ENCODE measurements at regions of chr2 and their contacts with region 1.

Region 1: GRCh38 chr2:102520028-102520427 is 47.0 kb downstream of the SLC9A4 start:
- H3K4me3 Mint-ChIP-seq: no peak overlapping the region
- H3K27ac Mint-ChIP-seq: no peak overlapping the region
- H3K4me1 Mint-ChIP-seq: no peaks in the 10 kb centered on the region
- H3K27me3 Mint-ChIP-seq: no peaks in the 10 kb centered on the region

Region 2: GRCh38 chr2:102592597-102592996 is 72.6 kb after region 1 on chr2:
- intact Hi-C with region 1: loop called (anchors 2 kb)
- H3K4me3 Mint-ChIP-seq: no peak overlapping the region
- H3K27ac Mint-ChIP-seq: no peak overlapping the region
- H3K4me1 Mint-ChIP-seq: no peaks in the 10 kb centered on the region
- H3K27me3 Mint-ChIP-seq: peaks cover 20% of the 10 kb centered on the region

Region 3: GRCh38 chr2:102615622-102616436 is 95.8 kb after region 1 on chr2:
- intact Hi-C with region 1: loop called (anchors 1 kb)
- H3K4me3 Mint-ChIP-seq: no peak overlapping the region
- H3K27ac Mint-ChIP-seq: no peak overlapping the region
- H3K4me1 Mint-ChIP-seq: peaks cover 12% of the 10 kb centered on the region
- H3K27me3 Mint-ChIP-seq: peaks cover 63% of the 10 kb centered on the region

Measured in dendritic cell treated with granulocyte-macrophage colony-stimulating factor and Interleukin-4, amounts not matched to agents 40 ng/mL and 50 ng/mL, for 4 days (primary cell).